ENCODE measurements at regions of chr21 and their contacts with region 1.

Region 1: GRCh38 chr21:38819714-38820183 is 14.0 kb downstream of the ETS2 start:
- DNase-seq: no peak

Region 2: GRCh38 chr21:39105341-39105765 is 285.6 kb after region 1 on chr21:
- intact Hi-C with region 1: loop called in 1 of 2 experiments (anchors 10 kb)
- DNase-seq: no peak

Measured in posterior vena cava (tissue), 2 donors.